Transverse colon (tissue), 4 donors: ENCODE measurements at regions of chr19 and their contacts with region 1.

Region 1: DNA sequence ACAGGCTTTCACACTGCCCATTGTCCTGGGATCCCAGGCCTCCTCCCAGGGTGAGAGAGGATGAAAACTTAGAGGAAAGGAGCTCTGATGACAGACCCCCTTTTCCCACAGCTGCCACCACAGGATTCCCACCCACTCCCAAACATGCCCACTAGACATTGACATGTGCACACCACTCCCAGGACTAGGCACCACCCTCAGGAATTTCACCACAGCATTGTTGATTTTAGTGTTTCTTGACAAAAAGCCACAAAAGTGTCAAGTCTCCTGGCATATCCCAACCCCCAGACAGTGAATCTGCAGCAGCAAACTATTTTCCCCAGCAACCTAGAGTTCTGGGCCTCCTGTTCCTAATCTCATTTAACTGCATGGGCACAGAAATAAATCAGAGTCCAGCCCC is 10.1 kb downstream of the ZNF714 start:
- DNase-seq: no peak
- H3K4me3 ChIP-seq: no peak overlapping the region
- H3K27ac ChIP-seq: peak overlapping the region in 1 of 4 donors; percentile 29
- H3K4me1 ChIP-seq: peaks cover 0 to 4% (median 0%) of the 10 kb centered on the region in 4 donors
- H3K27me3 ChIP-seq: no peaks in the 10 kb centered on the region
- CTCF ChIP-seq: no peak
- EP300 ChIP-seq: no peak
- POLR2A ChIP-seq: no peak

Region 2: GRCh38 chr19:21151460-21151859 is 59.4 kb after region 1 on chr19:
- in situ Hi-C with region 1: loop called (anchors 5 to 10 kb)
- intact Hi-C with region 1: no loop called
- DNase-seq: no peak
- H3K4me3 ChIP-seq: no peak overlapping the region
- H3K27ac ChIP-seq: no peak overlapping the region
- H3K4me1 ChIP-seq: no peaks in the 10 kb centered on the region
- H3K27me3 ChIP-seq: no peaks in the 10 kb centered on the region
- CTCF ChIP-seq: no peak
- EP300 ChIP-seq: no peak
- POLR2A ChIP-seq: no peak

Region 3: GRCh38 chr19:21158523-21159135 is 66.5 kb after region 1 on chr19:
- in situ Hi-C with region 1: loop called in 3 of 4 experiments (anchors 5 to 10 kb)
- intact Hi-C with region 1: no loop called
- DNase-seq: no peak
- H3K4me3 ChIP-seq: no peak overlapping the region
- H3K27ac ChIP-seq: no peak overlapping the region
- H3K4me1 ChIP-seq: no peaks in the 10 kb centered on the region
- H3K27me3 ChIP-seq: no peaks in the 10 kb centered on the region
- CTCF ChIP-seq: no peak
- EP300 ChIP-seq: no peak
- POLR2A ChIP-seq: no peak